ENCODE measurements at regions of chr12 and their contacts with region 1.

Region 1: GRCh38 chr12:56117778-56118687 is at the start of gene ZC3H10:
- DNase-seq: peak; percentile 98 to 100
- H3K4me3 ChIP-seq: peak within 1 kb of the TSS; percentile 75 to 77
- H3K27ac ChIP-seq: peak within 1 kb of the TSS; percentile 94 to 95
- H3K4me1 ChIP-seq: peaks cover 10 to 16% of the 10 kb centered on the region in 2 donors
- H3K27me3 ChIP-seq: no peaks in the 10 kb centered on the region
- CTCF ChIP-seq: peak; percentile 50 to 59 (median 50)
- total RNA-seq, gene ZC3H10: 11.1 TPM

Region 2: GRCh38 chr12:55780685-55781084 is 337.3 kb before region 1 on chr12:
- intact Hi-C with region 1: no loop called
- DNase-seq: no peak
- H3K4me3 ChIP-seq: no peak overlapping the region
- H3K27ac ChIP-seq: no peak overlapping the region
- H3K4me1 ChIP-seq: no peaks in the 10 kb centered on the region
- H3K27me3 ChIP-seq: no peaks in the 10 kb centered on the region
- CTCF ChIP-seq: no peak

Region 3: GRCh38 chr12:55996715-55997534 is 121.1 kb before region 1 on chr12 and contains the start of gene SUOX:
- intact Hi-C with region 1: loop called (anchors 2 kb)
- DNase-seq: peak; percentile 96 to 98
- H3K4me3 ChIP-seq: peak within 1 kb of the TSS; percentile 70 to 72
- H3K27ac ChIP-seq: peak within 1 kb of the TSS; percentile 76 to 77
- H3K4me1 ChIP-seq: peaks cover 0 to 5% of the 10 kb centered on the region in 2 donors
- H3K27me3 ChIP-seq: no peaks in the 10 kb centered on the region
- CTCF ChIP-seq: no peak
- total RNA-seq, gene SUOX: 5.4 TPM

Region 4: GRCh38 chr12:56104109-56104814 is 13.8 kb before region 1 on chr12 and contains the start of gene PA2G4:
- intact Hi-C with region 1: loop called (anchors 1 kb)
- DNase-seq: peak; percentile 92 to 99
- H3K4me3 ChIP-seq: peak within 1 kb of the TSS; percentile 69 to 88
- H3K27ac ChIP-seq: peak within 1 kb of the TSS; percentile 77 to 83
- H3K4me1 ChIP-seq: peaks cover 0 to 13% of the 10 kb centered on the region in 2 donors
- H3K27me3 ChIP-seq: no peaks in the 10 kb centered on the region
- CTCF ChIP-seq: no peak
- total RNA-seq, gene PA2G4: 101 TPM

Region 5: GRCh38 chr12:56158029-56158925 is 40.2 kb after region 1 on chr12 and contains the start of gene MYL6:
- intact Hi-C with region 1: loop called (anchors 2 kb)
- DNase-seq: peak; percentile 95 to 99
- H3K4me3 ChIP-seq: peak within 1 kb of the TSS; percentile 83 to 96
- H3K27ac ChIP-seq: peak within 1 kb of the TSS; percentile 91 to 94
- H3K4me1 ChIP-seq: peaks cover 10 to 42% of the 10 kb centered on the region in 2 donors
- H3K27me3 ChIP-seq: no peaks in the 10 kb centered on the region
- CTCF ChIP-seq: no peak
- total RNA-seq, gene MYL6: 1,476 TPM

Region 6: DNA sequence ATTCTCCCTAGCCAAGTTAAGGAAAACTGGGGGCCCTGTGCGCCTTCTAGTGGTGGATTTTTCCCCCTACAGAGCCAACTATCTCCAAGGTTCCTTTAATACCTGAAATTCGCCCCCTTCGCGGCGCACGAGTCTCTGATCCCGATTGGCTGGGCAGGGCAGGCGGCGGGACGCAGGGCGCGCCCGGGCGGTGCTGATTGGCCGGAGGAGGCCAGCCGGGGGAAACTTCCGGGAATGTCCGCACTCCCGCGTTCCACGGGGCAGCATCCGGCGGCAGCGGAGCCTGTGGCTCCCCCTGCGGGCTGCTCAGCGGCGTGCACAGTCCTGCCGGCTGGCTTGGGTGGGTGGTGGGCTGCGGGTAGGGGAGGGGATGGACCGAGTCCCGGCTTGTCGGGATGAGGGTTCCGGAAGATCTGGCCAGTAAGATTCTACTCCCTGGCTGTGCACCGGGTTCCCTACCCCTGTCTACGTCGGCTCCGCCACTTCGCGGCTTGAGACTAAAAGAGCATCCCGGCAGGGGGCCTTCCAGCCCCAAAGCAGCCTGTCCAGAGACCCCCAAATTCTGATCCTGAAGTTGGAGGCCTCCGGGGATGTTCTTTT is 106.2 kb after region 1 on chr12 and contains the start of gene NABP2:
- intact Hi-C with region 1: loop called (anchors 1 kb)
- DNase-seq: peak; percentile 93 to 99
- H3K4me3 ChIP-seq: peak within 1 kb of the TSS; percentile 69 to 78
- H3K27ac ChIP-seq: peak within 1 kb of the TSS; percentile 98 to 100
- H3K4me1 ChIP-seq: peaks cover 16 to 36% of the 10 kb centered on the region in 2 donors
- H3K27me3 ChIP-seq: no peaks in the 10 kb centered on the region
- CTCF ChIP-seq: peak; percentile 82 to 96 (median 87)
- total RNA-seq, gene NABP2: 2.8 TPM

Region 7: GRCh38 chr12:56468216-56469006 is 350.4 kb after region 1 on chr12 and contains the start of gene SPRYD4:
- intact Hi-C with region 1: loop called (anchors 5 kb)
- DNase-seq: peak; percentile 81 to 96
- H3K4me3 ChIP-seq: peak within 1 kb of the TSS; percentile 58 to 85
- H3K27ac ChIP-seq: peak within 1 kb of the TSS; percentile 78 to 90
- H3K4me1 ChIP-seq: peaks cover 0 to 16% of the 10 kb centered on the region in 2 donors
- H3K27me3 ChIP-seq: no peaks in the 10 kb centered on the region
- CTCF ChIP-seq: peak in 2 of 3 experiments; percentile 38 to 47
- total RNA-seq, gene SPRYD4: 0.43 TPM

Region 8: DNA sequence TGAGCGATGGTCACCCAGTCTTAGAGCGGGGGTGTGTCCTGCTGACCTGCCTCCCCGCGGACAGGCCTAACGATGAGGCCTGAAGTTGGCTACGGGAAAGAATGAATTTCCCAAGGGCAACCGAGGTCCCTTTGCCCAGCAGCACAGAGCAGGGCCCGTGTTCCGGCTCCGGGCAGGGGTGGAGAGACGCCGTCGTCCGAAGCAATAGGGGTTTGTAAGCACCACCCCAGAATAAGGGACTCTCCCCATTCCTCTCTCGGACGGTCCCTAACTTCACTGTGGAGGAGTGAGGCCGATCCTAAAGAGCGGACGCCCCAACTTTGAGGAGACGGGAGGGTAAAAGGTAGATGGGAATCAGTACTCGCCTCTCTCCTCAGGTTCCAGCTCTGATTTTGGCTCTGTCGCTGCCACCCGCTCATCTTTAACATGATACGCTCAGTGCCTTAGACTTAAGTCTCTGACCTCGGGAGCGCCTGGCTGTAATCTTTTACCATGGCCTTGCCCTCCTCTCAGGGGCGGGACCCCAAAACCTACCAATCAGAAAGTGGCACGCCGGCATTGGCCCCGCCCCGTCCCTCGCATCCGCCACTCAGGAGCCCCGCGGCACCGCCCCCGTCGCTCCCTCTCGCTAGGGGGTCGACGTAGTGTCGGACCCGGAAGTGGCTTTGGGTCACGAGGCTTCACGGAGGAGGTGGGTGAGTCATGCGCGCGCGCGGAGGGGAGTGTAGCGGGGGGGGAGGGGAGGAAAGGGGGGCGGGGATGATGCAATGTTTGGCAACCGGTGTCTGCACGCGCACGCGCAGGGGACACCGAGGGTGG is 1402.2 kb after region 1 on chr12 and contains the start of gene DDIT3:
- intact Hi-C with region 1: loop called (anchors 5 kb)
- DNase-seq: peak; percentile 98 to 100
- H3K4me3 ChIP-seq: peak within 1 kb of the TSS; percentile 73 to 91
- H3K27ac ChIP-seq: peak within 1 kb of the TSS; percentile 98 to 99
- H3K4me1 ChIP-seq: peaks cover 29 to 52% of the 10 kb centered on the region in 2 donors
- H3K27me3 ChIP-seq: no peaks in the 10 kb centered on the region
- CTCF ChIP-seq: no peak
- total RNA-seq, gene DDIT3: 0.64 TPM